ENCODE measurements at regions of chr2 and their contacts with region 1.

Region 1: DNA sequence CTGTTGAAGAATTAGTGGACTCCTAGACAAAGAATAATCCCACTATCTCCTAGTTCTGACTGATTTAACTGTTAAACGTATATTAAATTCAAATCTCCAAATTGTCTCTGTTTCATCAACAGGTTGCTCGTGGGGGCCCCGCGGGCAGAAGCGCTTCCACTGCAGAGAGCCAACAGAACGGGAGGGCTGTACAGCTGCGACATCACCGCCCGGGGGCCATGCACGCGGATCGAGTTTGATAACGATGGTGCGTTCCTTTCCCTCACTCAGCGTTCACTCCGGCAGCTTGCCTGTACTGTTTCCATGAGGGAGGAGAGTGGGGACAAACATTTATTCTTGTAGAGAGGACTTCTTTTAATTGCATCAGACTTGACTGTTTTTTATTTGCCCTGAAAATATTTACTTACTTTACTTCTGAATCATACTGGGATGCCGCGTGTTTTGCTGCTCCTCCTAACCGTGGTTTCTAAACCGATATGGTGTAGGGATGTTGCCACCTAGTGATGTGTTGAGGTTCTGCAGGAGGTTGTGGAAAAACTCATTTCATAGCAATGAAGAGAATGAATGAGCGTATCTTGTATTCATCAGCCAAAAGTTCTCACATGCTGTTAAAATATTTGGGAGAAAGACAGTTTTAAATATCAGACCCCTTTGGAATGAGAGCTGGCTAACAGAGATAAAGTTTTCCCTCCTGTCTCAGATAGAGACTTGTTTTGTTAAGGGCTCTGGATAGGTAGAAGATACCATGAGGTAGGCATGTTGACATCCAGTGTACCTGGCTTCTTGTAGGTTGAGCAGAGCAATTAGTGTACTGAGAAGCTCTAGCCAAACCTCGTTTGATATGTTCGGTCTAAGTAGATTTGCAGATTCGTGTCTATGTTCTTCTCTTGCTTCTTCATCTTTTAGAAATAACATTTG is 38.3 kb downstream of the ITGA6 start:
- DNase-seq: peak; percentile 63
- ATAC-seq: peak; percentile 31
- H3K4me3 Mint-ChIP-seq: no peak overlapping the region
- H3K27ac Mint-ChIP-seq: peak overlapping the region; percentile 11
- H3K4me1 Mint-ChIP-seq: peaks cover 47% of the 10 kb centered on the region
- H3K27me3 Mint-ChIP-seq: no peaks in the 10 kb centered on the region
- CTCF ChIP-seq: peak; percentile 78

Region 2: DNA sequence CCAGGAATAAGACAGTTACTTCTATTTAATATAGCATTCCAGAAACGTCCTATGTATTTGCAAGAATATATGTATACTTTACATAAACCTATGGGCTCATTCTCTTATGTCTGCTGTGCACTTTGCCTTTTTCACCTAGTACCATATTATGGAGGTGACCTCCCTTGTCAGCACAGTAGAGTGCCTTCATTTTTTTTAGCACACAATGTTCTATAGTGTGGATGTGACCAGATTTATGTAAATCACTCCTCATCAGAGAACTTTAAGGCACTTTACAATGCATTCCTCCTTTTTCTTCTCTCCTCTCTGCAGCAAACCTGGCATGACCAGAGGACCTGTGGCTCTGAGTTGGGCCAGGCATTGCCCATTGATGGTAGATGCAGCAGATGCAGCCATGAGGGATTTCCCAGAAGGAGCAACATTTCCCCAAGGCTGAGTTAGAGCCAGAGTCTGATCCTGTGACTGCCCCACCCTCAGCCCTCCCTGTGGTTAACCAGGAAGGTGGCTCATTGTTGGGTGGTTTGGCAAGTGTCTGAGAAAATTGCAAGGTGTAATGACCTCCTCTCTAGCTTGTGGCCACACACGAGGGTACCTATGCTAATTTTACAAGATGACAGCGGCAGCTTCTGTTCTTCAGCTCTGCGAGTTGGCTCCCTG is 286.5 kb before region 1 on chr2:
- CTCF ChIA-PET with region 1: interaction called, 136 read pairs
- POLR2A ChIA-PET with region 1: no interaction called
- DNase-seq: no peak
- ATAC-seq: no peak
- H3K4me3 Mint-ChIP-seq: no peak overlapping the region
- H3K27ac Mint-ChIP-seq: no peak overlapping the region
- H3K4me1 Mint-ChIP-seq: peaks cover 27% of the 10 kb centered on the region
- H3K27me3 Mint-ChIP-seq: peaks cover 55% of the 10 kb centered on the region
- CTCF ChIP-seq: no peak

Region 3: GRCh38 chr2:172239944-172240590 is 225.6 kb before region 1 on chr2:
- CTCF ChIA-PET with region 1: interaction called, 22 read pairs
- POLR2A ChIA-PET with region 1: no interaction called
- DNase-seq: no peak
- ATAC-seq: no peak
- H3K4me3 Mint-ChIP-seq: no peak overlapping the region
- H3K27ac Mint-ChIP-seq: no peak overlapping the region
- H3K4me1 Mint-ChIP-seq: peaks cover 40% of the 10 kb centered on the region
- H3K27me3 Mint-ChIP-seq: peaks cover under 1% of the 10 kb centered on the region
- CTCF ChIP-seq: no peak

Region 4: DNA sequence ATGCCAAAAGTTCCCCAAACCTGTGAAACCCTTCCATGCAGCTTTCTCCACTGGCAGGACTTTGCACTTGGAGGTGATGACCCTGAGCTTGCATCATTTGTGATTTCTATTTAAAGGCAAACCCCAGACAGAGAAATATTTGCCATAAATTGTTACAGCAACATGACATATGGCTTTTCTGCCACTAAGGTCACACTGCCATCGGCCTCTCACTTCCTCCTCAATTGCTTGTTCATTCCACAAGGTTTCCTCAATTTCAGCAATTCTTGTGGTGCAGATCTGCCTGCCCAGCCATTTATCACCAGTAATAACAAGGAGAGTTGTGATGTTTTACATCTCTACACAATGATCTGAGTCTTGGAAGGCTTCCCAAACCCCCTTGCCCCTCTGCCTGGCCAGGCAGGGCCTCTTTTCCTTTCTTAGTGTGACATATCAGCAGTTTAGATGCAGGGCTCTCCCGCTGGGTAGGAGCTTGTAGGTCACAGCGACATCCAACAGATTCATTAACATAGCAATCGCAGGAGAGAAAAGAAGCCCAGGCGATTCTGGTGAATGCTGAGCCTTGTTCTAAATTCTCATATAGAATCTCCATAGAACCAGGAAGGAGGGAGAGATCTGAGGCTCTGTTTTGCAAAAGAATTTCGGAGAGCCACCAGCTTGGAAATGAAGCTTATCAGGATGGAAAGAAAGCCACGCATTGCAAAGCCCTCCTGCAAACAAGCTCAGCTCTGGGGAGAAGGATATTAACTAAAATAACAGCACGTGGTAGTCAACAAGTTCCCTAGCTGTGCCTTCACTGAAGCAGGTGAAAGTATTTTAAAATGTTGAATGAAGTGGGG is 85.0 kb before region 1 on chr2:
- CTCF ChIA-PET with region 1: interaction called, 38 read pairs
- POLR2A ChIA-PET with region 1: no interaction called
- DNase-seq: peak; percentile 75
- ATAC-seq: peak; percentile 85
- H3K4me3 Mint-ChIP-seq: peak overlapping the region; percentile 47
- H3K27ac Mint-ChIP-seq: peak overlapping the region; percentile 100
- H3K4me1 Mint-ChIP-seq: peaks cover 71% of the 10 kb centered on the region
- H3K27me3 Mint-ChIP-seq: peaks cover 33% of the 10 kb centered on the region
- CTCF ChIP-seq: no peak

Region 5: DNA sequence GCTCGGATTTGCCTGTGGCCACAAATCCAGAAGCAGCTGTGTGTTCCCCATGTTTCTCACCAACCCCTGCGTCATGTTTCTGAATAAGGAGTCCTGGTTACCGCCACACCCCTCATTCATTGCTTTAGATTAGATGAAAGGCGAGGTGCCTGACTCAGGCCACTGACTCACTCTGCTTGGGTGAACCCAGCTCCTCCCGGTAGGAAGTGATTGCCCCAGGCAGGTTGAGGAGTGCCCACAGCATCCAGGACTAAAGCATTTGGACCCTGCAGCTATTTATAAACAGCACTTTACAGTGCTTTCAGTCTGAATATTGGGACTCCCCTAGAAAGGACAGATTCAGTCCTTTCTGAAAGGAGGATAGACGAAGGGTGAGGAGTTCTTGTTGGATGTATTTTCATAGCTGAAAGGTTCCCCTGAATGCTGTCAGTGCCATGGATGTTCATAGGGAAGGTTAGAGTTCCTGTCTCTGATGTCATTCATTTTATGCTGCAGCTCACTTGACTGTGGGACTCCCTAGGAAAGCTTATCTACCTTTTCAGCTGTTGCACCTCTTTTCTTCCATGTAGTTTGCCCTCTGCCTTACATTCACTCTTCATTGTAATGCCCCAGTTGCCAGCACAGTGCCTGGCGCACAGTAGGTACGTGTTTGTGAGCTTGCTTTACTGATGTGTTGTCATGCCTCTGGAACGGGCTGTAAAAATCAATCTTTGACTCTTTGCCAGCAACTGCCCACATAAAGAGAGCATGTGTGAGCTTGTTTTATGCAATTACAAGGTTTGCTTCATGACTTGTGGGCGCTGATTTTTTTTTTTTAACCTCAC is 23.4 kb before region 1 on chr2:
- CTCF ChIA-PET with region 1: interaction called, 40 read pairs
- POLR2A ChIA-PET with region 1: no interaction called
- DNase-seq: no peak
- ATAC-seq: peak; percentile 78
- H3K4me3 Mint-ChIP-seq: no peak overlapping the region
- H3K27ac Mint-ChIP-seq: peak overlapping the region; percentile 35
- H3K4me1 Mint-ChIP-seq: peaks cover 51% of the 10 kb centered on the region
- H3K27me3 Mint-ChIP-seq: no peaks in the 10 kb centered on the region
- CTCF ChIP-seq: no peak

Measured in WTC11 (cell line).